Activated naive CD4-positive, alpha-beta T cell treated with anti-CD3 and anti-CD28 coated beads for 36 hours (primary cell): ENCODE measurements at regions of chr12 and their contacts with region 1.

Region 1: GRCh38 chr12:51424662-51425438 is at the start of gene SLC4A8:
- DNase-seq: peak; percentile 83
- H3K4me3 Mint-ChIP-seq: peak within 1 kb of the TSS; percentile 74
- H3K27ac Mint-ChIP-seq: no peak within 1 kb of the TSS
- H3K4me1 Mint-ChIP-seq: peaks cover 10% of the 10 kb centered on the region
- H3K27me3 Mint-ChIP-seq: no peaks in the 10 kb centered on the region
- total RNA-seq, gene SLC4A8: 0.89 to 1.8 TPM

Region 2: GRCh38 chr12:51351913-51352532 is 72.8 kb before region 1 on chr12:
- CTCF ChIA-PET with region 1: no interaction called
- intact Hi-C with region 1: no loop called
- DNase-seq: peak; percentile 68
- H3K4me3 Mint-ChIP-seq: no peak overlapping the region
- H3K27ac Mint-ChIP-seq: no peak overlapping the region
- H3K4me1 Mint-ChIP-seq: peaks cover 5% of the 10 kb centered on the region
- H3K27me3 Mint-ChIP-seq: no peaks in the 10 kb centered on the region

Region 3: DNA sequence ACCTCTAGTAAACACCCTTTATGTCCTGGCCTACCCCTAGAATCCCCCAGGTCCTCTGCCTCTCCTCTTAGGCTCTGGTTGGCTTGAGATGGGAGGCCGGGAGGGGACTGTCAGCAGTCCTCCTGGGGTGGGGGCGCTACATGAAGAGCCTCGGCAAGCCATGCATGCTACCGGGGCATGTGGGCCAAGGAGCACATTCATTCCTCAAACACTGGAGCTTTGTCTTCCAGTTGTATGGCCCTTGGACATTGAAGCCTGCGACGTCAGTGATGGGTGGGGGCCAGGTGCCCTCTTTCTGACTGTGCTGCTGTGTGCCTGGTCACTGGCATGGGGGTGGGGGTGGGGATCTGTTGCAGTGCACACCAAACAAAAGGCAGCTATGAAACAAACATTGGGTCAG is 62.5 kb before region 1 on chr12:
- CTCF ChIA-PET with region 1: no interaction called
- intact Hi-C with region 1: no loop called
- DNase-seq: no peak
- H3K4me3 Mint-ChIP-seq: no peak overlapping the region
- H3K27ac Mint-ChIP-seq: no peak overlapping the region
- H3K4me1 Mint-ChIP-seq: peaks cover 9% of the 10 kb centered on the region
- H3K27me3 Mint-ChIP-seq: no peaks in the 10 kb centered on the region

Region 4: DNA sequence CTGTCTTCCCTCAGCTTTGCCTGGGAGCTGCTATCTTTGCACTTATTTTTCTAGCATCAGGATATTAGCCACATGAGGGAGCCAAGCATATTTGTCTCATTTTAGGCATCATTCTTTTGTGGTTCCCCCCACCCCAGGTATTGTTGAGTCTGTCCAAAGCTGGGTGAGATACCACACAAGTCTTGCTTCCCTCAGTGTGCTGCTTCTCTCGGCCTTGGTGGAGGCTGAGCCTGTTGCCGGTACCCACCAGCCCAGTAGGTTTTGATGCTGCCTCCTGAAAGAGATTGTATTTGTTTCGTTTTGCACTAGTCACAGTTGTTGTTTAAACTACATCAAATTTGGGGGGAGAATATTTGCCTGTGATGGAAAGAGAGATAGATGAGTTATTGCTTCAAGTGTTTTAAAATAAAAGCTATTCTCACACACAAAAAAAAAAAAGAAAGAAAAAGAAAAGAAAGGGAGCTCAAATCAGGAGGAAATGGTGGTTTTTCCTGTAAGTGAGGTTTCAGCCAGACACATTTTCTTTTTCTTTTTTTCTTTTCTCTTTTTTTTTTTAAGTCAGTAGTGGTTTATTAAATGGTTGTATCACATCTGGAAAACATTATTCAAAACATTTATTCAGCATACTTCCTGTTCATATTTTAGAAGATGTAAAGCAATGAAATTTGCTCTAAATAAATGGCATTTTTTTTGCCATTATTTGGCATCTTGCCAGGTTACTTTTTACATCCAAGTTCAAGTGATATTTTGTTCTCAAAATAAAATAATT is 58.3 kb after region 1 on chr12:
- CTCF ChIA-PET with region 1: interaction called, 5 read pairs
- intact Hi-C with region 1: loop called (anchors 2 kb)
- DNase-seq: peak; percentile 50
- H3K4me3 Mint-ChIP-seq: peak overlapping the region; percentile 62
- H3K27ac Mint-ChIP-seq: peak overlapping the region; percentile 88
- H3K4me1 Mint-ChIP-seq: peaks cover 40% of the 10 kb centered on the region
- H3K27me3 Mint-ChIP-seq: no peaks in the 10 kb centered on the region

Region 5: DNA sequence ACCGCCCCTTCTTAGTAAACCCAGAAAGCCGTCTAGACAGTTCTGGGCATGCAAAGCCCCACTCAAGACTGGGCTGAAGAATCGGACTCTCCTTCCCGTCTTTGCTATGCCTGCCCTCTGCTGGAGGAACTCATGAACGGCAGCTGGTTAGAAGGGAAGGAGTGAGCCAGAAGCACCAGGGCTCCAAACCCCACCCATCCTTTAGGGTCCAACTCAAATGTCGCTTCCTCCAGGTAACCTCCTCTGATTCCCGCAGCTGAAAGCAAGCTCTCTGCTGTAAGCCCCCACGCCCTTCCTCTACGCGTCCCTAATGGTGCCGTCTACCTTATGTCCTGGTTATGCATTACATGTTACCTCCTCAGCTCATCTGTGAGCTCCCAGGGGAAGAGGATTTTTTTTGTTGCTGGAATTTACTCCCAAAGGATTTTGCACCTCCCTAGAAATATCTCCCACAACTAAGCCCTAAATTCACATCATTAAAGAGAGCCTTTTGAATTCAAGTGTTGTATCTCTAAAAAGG is 107.2 kb after region 1 on chr12:
- CTCF ChIA-PET with region 1: interaction called, 142 read pairs
- intact Hi-C with region 1: loop called (anchors 1 kb)
- DNase-seq: peak; percentile 87
- H3K4me3 Mint-ChIP-seq: no peak overlapping the region
- H3K27ac Mint-ChIP-seq: no peak overlapping the region
- H3K4me1 Mint-ChIP-seq: peaks cover 5% of the 10 kb centered on the region
- H3K27me3 Mint-ChIP-seq: peaks cover 2% of the 10 kb centered on the region

Region 6: DNA sequence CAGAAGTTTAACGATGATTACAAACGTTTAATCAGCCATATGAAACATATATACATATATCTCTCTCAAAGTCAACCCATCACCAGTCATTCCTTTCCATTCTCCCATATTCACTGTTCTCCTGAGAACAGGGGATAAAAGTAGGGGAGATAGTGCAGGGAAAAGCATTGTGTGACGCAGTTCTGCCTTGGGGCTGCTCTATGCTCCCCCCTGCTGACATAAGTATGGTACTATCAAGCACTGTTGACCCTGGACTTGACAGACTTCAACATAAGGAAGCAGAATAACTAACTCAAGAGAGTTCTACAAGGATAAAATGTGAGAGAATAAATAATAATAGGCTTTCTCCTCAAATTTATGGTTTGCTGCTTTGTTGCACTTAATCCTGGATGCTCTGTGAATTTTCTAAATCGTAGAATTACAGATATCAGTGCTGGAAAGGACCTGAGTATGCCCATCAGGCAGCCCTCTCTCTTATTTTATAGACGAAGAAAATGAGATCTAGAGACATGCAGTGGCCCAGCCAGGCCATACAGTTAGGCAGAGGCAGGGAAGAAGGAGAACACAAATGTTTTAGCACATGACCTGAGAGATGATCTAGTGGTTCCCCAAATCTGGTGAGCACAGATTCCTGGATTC is 253.4 kb after region 1 on chr12:
- CTCF ChIA-PET with region 1: interaction called, 11 read pairs
- intact Hi-C with region 1: loop called (anchors 1 kb)
- DNase-seq: peak; percentile 30
- H3K4me3 Mint-ChIP-seq: no peak overlapping the region
- H3K27ac Mint-ChIP-seq: no peak overlapping the region
- H3K4me1 Mint-ChIP-seq: no peaks in the 10 kb centered on the region
- H3K27me3 Mint-ChIP-seq: no peaks in the 10 kb centered on the region

Region 7: GRCh38 chr12:51823875-51824565 is 399.2 kb after region 1 on chr12:
- CTCF ChIA-PET with region 1: interaction called, 16 read pairs
- intact Hi-C with region 1: no loop called
- DNase-seq: peak; percentile 50
- H3K4me3 Mint-ChIP-seq: no peak overlapping the region
- H3K27ac Mint-ChIP-seq: no peak overlapping the region
- H3K4me1 Mint-ChIP-seq: peaks cover 28% of the 10 kb centered on the region
- H3K27me3 Mint-ChIP-seq: no peaks in the 10 kb centered on the region